Activated CD4-positive, alpha-beta memory T cell treated with anti-CD3 and anti-CD28 coated beads, Interleukin-2, amount 10 ng/mL, durations not matched to agents 7 days and 5 days (primary cell): ENCODE measurements at regions of chr5 and their contacts with region 1.

Region 1: GRCh38 chr5:87074934-87075541 is 192.6 kb upstream of the RASA1 start:
- DNase-seq: peak; percentile 64
- H3K4me3 Mint-ChIP-seq: peak overlapping the region; percentile 0
- H3K27ac Mint-ChIP-seq: peak overlapping the region; percentile 91
- H3K4me1 Mint-ChIP-seq: peaks cover 42% of the 10 kb centered on the region
- H3K27me3 Mint-ChIP-seq: no peaks in the 10 kb centered on the region

Region 2: DNA sequence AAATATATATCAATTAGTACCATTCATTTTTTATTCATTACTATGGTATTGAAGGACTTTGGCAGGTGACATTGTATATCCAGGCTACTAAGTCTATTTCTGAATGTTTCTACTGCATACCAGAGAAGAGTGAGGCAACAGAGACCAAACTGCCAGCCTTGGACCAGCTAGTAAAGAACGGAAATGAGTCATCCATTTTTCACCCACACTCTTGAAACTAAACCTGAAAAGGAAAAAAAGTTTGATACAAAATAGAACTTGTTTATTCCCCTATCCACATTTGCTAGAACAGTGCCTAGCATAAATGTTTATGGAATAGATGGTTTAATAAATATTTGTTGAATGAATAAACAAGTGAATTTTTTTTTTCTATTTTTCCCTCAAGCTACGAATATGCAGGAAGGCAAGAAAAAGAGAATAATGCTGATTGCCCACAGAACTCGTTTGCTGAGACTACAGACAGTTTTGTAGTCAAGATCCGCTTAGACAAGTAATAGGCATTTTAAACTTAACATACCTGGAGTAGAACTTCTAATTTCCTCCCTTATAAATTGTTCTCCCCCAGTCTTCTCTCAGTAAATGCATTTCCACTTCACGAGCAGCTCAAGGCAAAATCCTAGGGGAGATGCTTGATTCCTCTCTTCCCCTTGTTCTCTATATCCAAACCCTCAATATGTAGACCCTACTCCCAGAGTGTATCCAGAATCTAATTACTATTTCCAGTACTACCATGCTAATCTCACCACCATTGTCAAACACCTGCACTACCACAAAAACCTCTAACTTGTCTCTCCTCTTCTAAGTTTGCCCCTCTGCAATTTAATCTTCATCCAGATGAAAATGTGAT is 46.5 kb after region 1 on chr5:
- CTCF ChIA-PET with region 1: interaction called, 3 read pairs
- POLR2A ChIA-PET with region 1: interaction called, 12 read pairs
- DNase-seq: peak; percentile 51
- H3K4me3 Mint-ChIP-seq: peak overlapping the region; percentile 44
- H3K27ac Mint-ChIP-seq: peak overlapping the region; percentile 90
- H3K4me1 Mint-ChIP-seq: peaks cover 59% of the 10 kb centered on the region
- H3K27me3 Mint-ChIP-seq: no peaks in the 10 kb centered on the region

Region 3: DNA sequence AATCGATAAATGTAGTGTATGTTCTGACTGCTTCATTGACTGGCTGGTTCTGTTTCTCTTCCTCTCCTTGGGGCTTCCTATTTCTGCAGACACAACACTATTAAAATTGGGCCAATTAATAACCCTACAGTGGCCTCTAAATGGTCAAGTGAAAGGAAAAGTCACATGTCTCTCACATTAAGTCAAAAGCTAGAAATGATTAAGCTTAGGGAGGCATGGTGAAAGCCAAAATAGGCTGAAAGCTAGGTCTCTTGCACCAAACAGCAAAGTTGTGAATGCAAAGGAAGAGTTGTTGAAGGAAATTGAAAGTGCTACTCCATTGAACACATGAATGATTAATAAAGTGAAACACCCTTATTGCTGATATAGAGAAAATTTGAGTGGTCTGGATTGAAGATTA is 279.5 kb after region 1 on chr5:
- CTCF ChIA-PET with region 1: no interaction called
- POLR2A ChIA-PET with region 1: no interaction called
- DNase-seq: no peak
- H3K4me3 Mint-ChIP-seq: no peak overlapping the region
- H3K27ac Mint-ChIP-seq: no peak overlapping the region
- H3K4me1 Mint-ChIP-seq: peaks cover 12% of the 10 kb centered on the region
- H3K27me3 Mint-ChIP-seq: no peaks in the 10 kb centered on the region

Region 4: GRCh38 chr5:87390075-87390887 is 315.2 kb after region 1 on chr5:
- CTCF ChIA-PET with region 1: no interaction called
- POLR2A ChIA-PET with region 1: no interaction called
- DNase-seq: no peak
- H3K4me3 Mint-ChIP-seq: no peak overlapping the region
- H3K27ac Mint-ChIP-seq: no peak overlapping the region
- H3K4me1 Mint-ChIP-seq: peaks cover 19% of the 10 kb centered on the region
- H3K27me3 Mint-ChIP-seq: no peaks in the 10 kb centered on the region